Right lobe of liver (tissue), 6 donors: ENCODE measurements at regions of chr9 and their contacts with region 1.

Region 1: GRCh38 chr9:130682490-130683121 is 11.0 kb upstream of the EXOSC2 start:
- DNase-seq: peak; percentile 86 to 91 (median 91)
- ATAC-seq: peak; percentile 81 to 84 (median 82)
- H3K4me3 ChIP-seq: peak overlapping the region in 2 of 3 donors; percentile 57 to 59
- H3K27ac ChIP-seq: peak overlapping the region in 1 of 3 donors; percentile 54
- H3K4me1 ChIP-seq: peaks cover 0 to 24% (median 0%) of the 10 kb centered on the region in 4 donors
- H3K27me3 ChIP-seq: no peaks in the 10 kb centered on the region
- CTCF ChIP-seq: peak; percentile 68 to 89 (median 82)
- POLR2A ChIP-seq: peak; percentile 55

Region 2: DNA sequence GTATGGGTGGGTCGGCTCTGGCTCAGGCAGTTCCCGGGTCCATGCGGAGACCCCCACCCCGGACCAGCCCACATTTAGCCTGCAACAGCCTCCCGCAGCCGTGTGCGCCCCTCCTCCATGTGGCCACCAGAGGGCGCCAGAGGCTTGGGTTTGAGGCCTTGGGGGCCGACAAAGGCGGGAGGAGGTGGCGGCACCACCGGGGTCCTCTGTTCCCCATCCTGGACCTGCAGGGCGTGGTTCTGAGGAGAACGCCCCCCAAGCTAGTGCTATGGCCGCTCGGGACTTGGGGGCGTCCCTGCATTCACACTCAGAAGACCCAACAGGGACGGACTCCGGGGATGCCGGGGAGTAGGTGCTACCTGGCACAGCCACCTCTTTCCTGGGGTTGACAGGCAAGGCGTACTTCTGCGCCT is 221.4 kb before region 1 on chr9:
- intact Hi-C with region 1: loop called (anchors 2 to 5 kb)
- DNase-seq: peak in 2 of 3 donors; percentile 65 to 75
- ATAC-seq: peak in 3 of 4 donors; percentile 11 to 29 (median 13)
- H3K4me3 ChIP-seq: no peak overlapping the region
- H3K27ac ChIP-seq: peak overlapping the region in 1 of 3 donors; percentile 87
- H3K4me1 ChIP-seq: peaks cover 0 to 82% (median 19%) of the 10 kb centered on the region in 4 donors
- H3K27me3 ChIP-seq: no peaks in the 10 kb centered on the region
- CTCF ChIP-seq: peak; percentile 83 to 90 (median 90)
- POLR2A ChIP-seq: no peak

Region 3: DNA sequence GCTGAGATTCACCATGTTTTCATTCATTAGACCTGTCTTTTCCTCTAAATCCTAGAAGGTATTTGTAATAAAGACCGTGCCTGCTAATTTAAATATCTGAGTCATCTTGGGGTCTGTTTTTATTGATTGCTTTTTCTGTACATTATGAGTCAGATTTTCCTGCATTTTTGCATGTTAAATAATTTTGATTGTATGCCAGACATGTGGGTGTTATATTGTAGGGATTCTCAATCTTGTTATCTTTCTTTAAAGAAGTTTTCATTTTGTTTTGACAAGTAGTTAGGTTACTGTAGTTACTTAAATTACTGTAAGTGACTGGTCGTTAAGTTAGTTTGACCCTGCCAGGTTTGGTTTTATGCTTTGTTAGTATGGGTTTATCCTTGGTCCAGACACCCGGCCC is 46.1 kb after region 1 on chr9:
- intact Hi-C with region 1: no loop called
- DNase-seq: no peak
- ATAC-seq: no peak
- H3K4me3 ChIP-seq: no peak overlapping the region
- H3K27ac ChIP-seq: no peak overlapping the region
- H3K4me1 ChIP-seq: peaks cover 0 to 17% (median 0%) of the 10 kb centered on the region in 4 donors
- H3K27me3 ChIP-seq: no peaks in the 10 kb centered on the region
- CTCF ChIP-seq: no peak
- POLR2A ChIP-seq: no peak